Naive thymus-derived CD4-positive, alpha-beta T cell (primary cell): ENCODE measurements at regions of chr22 and their contacts with region 1.

Region 1: GRCh38 chr22:42662114-42663021 is 13.2 kb upstream of the CYB5R3 start:
- DNase-seq: peak; percentile 61 to 87 (median 77)
- ATAC-seq: peak; percentile 95
- H3K4me3 ChIP-seq: peak overlapping the region; percentile 66
- H3K4me3 Mint-ChIP-seq: peak overlapping the region; percentile 48 to 77 (median 70)
- H3K27ac ChIP-seq: no peak overlapping the region
- H3K27ac Mint-ChIP-seq: no peak overlapping the region
- H3K4me1 ChIP-seq: no peaks in the 10 kb centered on the region
- H3K4me1 Mint-ChIP-seq: peaks cover 0 to 4% (median 0%) of the 10 kb centered on the region in 7 donors
- H3K27me3 ChIP-seq: no peaks in the 10 kb centered on the region
- H3K27me3 Mint-ChIP-seq: peaks cover 0 to 21% (median 0%) of the 10 kb centered on the region in 5 donors

Region 2: DNA sequence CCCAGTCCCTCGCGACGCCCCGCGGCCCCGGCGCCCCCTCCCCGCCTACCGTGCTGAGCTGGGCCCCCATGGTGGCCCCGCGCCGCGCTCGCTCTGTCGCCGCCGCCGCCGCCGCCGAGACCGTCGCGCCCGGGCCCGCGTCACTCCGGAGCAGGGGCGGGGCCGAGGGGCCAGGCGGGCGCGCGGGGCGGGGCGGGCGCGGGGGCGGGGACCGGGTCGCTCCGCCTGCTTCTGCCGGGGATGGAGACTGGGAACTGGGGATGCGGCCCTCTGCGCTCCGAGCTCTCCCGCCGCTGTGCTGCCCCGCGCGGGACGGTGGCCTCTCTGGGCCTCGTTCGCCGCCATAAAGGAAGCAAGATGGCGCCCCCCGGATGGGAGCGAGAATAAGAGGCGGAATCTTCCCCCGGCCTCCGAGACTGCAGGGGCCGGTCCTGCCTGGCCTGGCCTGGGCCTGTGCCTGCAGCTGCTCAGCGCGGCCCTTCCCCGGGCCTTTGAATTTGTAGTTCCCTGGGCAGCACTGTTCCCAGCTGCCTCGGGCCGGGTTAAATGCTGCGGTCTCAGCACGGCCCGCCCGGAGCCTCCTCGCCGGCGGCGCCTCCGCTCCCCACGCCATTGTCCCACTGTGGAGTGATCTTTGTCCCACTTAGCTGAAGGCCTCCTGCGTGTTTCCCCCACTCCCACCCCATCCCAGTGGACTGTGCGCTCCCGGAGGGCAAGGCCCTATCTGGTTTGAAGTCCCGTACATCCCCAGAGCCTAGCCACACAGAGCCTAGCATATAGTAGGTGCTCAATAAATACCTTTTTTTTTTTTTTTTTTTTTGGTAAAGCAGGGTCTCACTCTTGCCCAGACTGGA is 12.9 kb before region 1 on chr22 and contains the start of gene CYB5R3:
- CTCF ChIA-PET with region 1: interaction called, 3 read pairs
- POLR2A ChIA-PET with region 1: interaction called, 3 read pairs
- intact Hi-C with region 1: loop called in 1 of 2 experiments (anchors 1 kb)
- DNase-seq: peak; percentile 59 to 84 (median 76)
- ATAC-seq: peak; percentile 89
- H3K4me3 ChIP-seq: peak within 1 kb of the TSS; percentile 77
- H3K4me3 Mint-ChIP-seq: peak within 1 kb of the TSS; percentile 91 to 100 (median 98)
- H3K27ac ChIP-seq: peak within 1 kb of the TSS; percentile 84
- H3K27ac Mint-ChIP-seq: peak within 1 kb of the TSS; percentile 91 to 100 (median 98)
- H3K4me1 ChIP-seq: peaks cover 11 to 16% of the 10 kb centered on the region in 2 donors
- H3K4me1 Mint-ChIP-seq: peaks cover 7 to 38% (median 28%) of the 10 kb centered on the region in 7 donors
- H3K27me3 ChIP-seq: no peaks in the 10 kb centered on the region
- H3K27me3 Mint-ChIP-seq: peaks cover 0 to 2% (median 0%) of the 10 kb centered on the region in 5 donors
- total RNA-seq, gene CYB5R3: 34.3 to 70.6 (median 42.3) TPM

Region 3: GRCh38 chr22:42697542-42698013 is 35.2 kb after region 1 on chr22:
- CTCF ChIA-PET with region 1: no interaction called
- POLR2A ChIA-PET with region 1: no interaction called
- intact Hi-C with region 1: no loop called
- DNase-seq: no peak
- ATAC-seq: no peak
- H3K4me3 ChIP-seq: no peak overlapping the region
- H3K4me3 Mint-ChIP-seq: no peak overlapping the region
- H3K27ac ChIP-seq: no peak overlapping the region
- H3K27ac Mint-ChIP-seq: no peak overlapping the region
- H3K4me1 ChIP-seq: no peaks in the 10 kb centered on the region
- H3K4me1 Mint-ChIP-seq: no peaks in the 10 kb centered on the region
- H3K27me3 ChIP-seq: no peaks in the 10 kb centered on the region
- H3K27me3 Mint-ChIP-seq: peaks cover 0 to 5% (median 0%) of the 10 kb centered on the region in 5 donors

Region 4: GRCh38 chr22:42820066-42820763 is 157.8 kb after region 1 on chr22:
- CTCF ChIA-PET with region 1: no interaction called
- POLR2A ChIA-PET with region 1: no interaction called
- intact Hi-C with region 1: loop called (anchors 1 to 5 kb)
- DNase-seq: peak in 4 of 9 donors; percentile 8 to 28 (median 10)
- ATAC-seq: no peak
- H3K4me3 ChIP-seq: no peak overlapping the region
- H3K4me3 Mint-ChIP-seq: no peak overlapping the region
- H3K27ac ChIP-seq: no peak overlapping the region
- H3K27ac Mint-ChIP-seq: peak overlapping the region in 4 of 9 donors; percentile 0 to 36 (median 22)
- H3K4me1 ChIP-seq: no peaks in the 10 kb centered on the region
- H3K4me1 Mint-ChIP-seq: peaks cover 0 to 9% (median 4%) of the 10 kb centered on the region in 7 donors
- H3K27me3 ChIP-seq: no peaks in the 10 kb centered on the region
- H3K27me3 Mint-ChIP-seq: no peaks in the 10 kb centered on the region

Region 5: DNA sequence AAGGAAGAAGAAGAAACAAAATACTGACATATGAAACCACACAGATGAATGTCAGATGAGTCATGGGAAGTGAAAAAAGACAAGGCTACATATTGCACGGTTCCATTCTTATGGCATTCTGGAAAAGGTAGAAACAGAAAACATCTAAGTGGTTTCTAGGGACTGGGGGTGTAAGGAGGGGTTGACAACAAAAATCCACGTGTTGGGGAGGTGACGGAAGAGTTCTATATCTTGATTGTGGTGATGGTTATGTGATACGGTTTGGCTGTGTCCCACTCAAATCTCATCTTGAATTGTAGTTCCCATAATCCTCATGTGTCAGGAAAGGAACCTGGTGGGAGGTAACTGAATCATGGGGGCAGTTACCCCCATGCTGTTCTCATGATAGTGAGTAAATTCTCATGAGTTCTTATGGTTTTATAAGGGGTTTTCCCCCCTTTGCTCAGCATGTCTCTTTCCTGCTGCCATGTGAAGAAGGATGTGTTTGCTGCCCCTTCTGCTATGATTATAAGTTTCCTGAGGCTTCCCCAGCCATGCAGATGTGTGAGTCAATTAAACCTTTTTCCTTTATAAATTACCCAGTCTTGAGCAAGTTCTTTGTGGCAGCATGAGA is 201.1 kb after region 1 on chr22:
- CTCF ChIA-PET with region 1: no interaction called
- POLR2A ChIA-PET with region 1: no interaction called
- intact Hi-C with region 1: loop called in 1 of 2 experiments (anchors 1 kb)
- DNase-seq: peak in 1 of 9 donors; percentile 44
- ATAC-seq: peak; percentile 40
- H3K4me3 ChIP-seq: no peak overlapping the region
- H3K4me3 Mint-ChIP-seq: no peak overlapping the region
- H3K27ac ChIP-seq: no peak overlapping the region
- H3K27ac Mint-ChIP-seq: peak overlapping the region in 5 of 9 donors; percentile 0 to 39 (median 12)
- H3K4me1 ChIP-seq: no peaks in the 10 kb centered on the region
- H3K4me1 Mint-ChIP-seq: peaks cover 0 to 16% (median 9%) of the 10 kb centered on the region in 7 donors
- H3K27me3 ChIP-seq: no peaks in the 10 kb centered on the region
- H3K27me3 Mint-ChIP-seq: no peaks in the 10 kb centered on the region

Region 6: DNA sequence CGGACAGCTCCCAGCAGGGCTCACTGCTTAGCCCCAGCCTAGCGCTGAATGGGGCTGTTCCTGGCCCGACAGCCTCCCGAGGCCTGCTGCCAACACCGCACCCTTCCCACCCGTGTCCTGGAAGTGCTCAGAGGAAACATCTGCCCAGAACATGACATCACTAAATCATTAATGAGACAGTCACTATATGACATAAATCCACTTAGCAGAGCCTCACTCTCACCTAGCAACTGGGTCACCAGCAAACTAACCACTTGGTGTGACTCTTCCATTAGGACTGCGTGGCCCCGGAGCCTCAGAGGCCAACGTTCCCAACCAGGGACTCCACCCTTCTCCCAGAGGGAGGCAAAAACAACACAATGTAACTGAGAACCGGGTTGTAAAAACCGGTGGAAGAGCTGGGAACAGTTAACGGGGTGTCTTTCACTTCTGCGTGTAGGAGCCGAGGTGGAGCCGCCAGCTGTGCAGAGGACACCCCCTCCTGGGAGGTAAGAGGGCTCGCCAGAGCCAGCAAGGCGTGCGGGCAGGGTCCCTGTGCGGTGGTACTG is 374.0 kb after region 1 on chr22:
- CTCF ChIA-PET with region 1: no interaction called
- POLR2A ChIA-PET with region 1: no interaction called
- intact Hi-C with region 1: loop called in 1 of 2 experiments (anchors 2 kb)
- DNase-seq: no peak
- ATAC-seq: no peak
- H3K4me3 ChIP-seq: no peak overlapping the region
- H3K4me3 Mint-ChIP-seq: no peak overlapping the region
- H3K27ac ChIP-seq: no peak overlapping the region
- H3K27ac Mint-ChIP-seq: no peak overlapping the region
- H3K4me1 ChIP-seq: no peaks in the 10 kb centered on the region
- H3K4me1 Mint-ChIP-seq: peaks cover 0 to 8% (median 3%) of the 10 kb centered on the region in 7 donors
- H3K27me3 ChIP-seq: no peaks in the 10 kb centered on the region
- H3K27me3 Mint-ChIP-seq: no peaks in the 10 kb centered on the region